ENCODE measurements at regions of chr1 and their contacts with region 1.

Region 1: DNA sequence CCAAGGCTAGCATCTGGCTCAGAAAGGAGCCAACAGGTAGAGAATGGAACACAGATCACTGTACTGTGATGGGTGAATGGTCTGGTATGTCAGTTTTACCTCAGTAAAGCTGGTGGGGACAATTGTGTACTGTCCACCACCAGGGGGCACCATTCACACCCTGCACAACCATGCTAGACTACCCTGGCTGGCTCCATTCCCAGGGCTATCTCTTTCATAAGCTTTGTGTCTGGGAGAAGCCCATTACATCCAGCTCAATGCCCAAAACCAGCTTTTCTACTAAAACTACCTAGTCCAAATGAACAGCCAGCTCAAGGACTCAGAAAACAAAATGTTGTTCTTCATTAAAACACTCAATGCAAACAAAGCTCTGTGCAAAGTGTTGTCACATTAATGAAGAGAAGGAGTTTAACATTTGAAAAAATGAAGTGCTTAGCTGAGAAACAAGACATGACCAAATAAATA is 62.0 kb upstream of the RASAL2 start:
- DNase-seq: peak in 1 of 2 donors; percentile 94
- H3K4me3 ChIP-seq: no peak overlapping the region
- H3K27ac ChIP-seq: no peak overlapping the region
- H3K4me1 ChIP-seq: no peaks in the 10 kb centered on the region
- H3K27me3 ChIP-seq: no peaks in the 10 kb centered on the region
- CTCF ChIP-seq: peak; percentile 80 to 83 (median 80)

Region 2: GRCh38 chr1:178093205-178093957 is 61.5 kb after region 1 on chr1:
- intact Hi-C with region 1: loop called (anchors 1 kb)
- DNase-seq: peak; percentile 64 to 94
- H3K4me3 ChIP-seq: peak overlapping the region; percentile 78 to 84
- H3K27ac ChIP-seq: peak overlapping the region; percentile 86 to 97
- H3K4me1 ChIP-seq: peaks cover 4 to 8% of the 10 kb centered on the region in 2 donors
- H3K27me3 ChIP-seq: no peaks in the 10 kb centered on the region
- CTCF ChIP-seq: no peak

Region 3: DNA sequence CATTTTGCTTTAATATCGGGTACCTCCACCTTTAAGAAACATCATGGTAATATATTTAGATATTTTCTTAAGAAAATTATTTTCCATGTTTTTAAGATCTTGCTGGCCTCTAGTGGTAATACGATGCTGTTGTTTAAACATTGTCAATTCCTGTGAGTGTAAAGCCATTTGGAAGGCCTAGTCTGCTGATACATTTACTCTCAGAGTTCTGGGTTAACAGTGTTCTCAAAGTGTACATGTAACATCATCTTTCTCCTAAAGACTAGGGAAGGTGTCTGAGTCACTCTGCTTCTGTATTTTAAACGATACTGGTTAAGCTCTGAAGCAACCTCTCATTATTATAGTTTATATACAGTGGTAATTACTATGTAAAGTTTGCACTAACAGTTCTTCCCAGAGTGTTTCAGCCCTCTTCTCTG is 251.1 kb after region 1 on chr1:
- intact Hi-C with region 1: loop called (anchors 2 kb)
- DNase-seq: no peak
- H3K4me3 ChIP-seq: no peak overlapping the region
- H3K27ac ChIP-seq: no peak overlapping the region
- H3K4me1 ChIP-seq: no peaks in the 10 kb centered on the region
- H3K27me3 ChIP-seq: no peaks in the 10 kb centered on the region
- CTCF ChIP-seq: peak; percentile 13 to 47 (median 25)